Motor neuron (in vitro differentiated cells): ENCODE measurements at regions of chr12 and their contacts with region 1.

Region 1: DNA sequence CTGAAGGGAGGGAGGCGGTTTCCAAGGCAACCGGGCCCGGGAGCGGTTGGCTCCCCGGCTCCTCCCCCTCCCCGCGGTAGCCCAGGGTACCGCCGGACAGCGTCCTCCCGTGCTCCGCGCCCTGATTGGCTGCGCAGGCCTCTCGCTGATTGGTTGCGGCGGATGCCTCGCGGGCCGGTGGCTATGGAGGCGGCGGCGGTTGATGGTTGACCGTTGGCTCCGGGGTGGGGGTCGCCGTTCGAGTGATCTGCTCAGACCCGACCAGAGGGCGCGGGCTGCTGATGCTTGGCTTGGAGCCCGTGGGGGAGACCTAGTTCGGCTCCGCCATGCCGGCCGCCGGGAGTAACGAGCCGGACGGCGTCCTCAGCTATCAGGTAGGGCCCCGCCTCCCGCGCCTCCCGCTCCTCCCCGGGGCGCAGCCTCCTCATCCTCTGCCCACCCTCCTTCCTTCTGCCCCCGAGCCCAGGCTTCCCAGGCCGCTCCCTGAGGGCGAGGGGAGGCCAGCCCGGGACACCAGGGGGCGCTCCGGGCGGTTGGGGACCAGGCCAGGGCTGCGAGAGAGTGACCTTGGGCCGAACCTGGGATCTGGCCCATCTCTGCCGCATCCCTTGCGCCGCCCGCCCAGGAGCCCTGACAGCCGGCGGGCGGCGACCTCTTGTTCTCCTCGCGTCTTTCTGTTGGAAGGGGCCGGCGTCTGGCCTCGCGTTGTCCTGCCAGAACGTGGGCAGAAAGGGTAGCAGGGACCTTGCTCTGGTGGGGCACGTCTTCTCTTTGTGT is at the start of gene SLC4A8:
- ATAC-seq: peak; percentile 95 to 98 (median 96)
- H3K4me3 ChIP-seq: peak within 1 kb of the TSS; percentile 58 to 78 (median 66)
- H3K27ac ChIP-seq: peak within 1 kb of the TSS; percentile 88 to 91
- H3K4me1 ChIP-seq: peaks cover 12 to 15% of the 10 kb centered on the region in 2 donors
- total RNA-seq, gene SLC4A8: 5.8 to 26.3 (median 19.8) TPM

Region 2: DNA sequence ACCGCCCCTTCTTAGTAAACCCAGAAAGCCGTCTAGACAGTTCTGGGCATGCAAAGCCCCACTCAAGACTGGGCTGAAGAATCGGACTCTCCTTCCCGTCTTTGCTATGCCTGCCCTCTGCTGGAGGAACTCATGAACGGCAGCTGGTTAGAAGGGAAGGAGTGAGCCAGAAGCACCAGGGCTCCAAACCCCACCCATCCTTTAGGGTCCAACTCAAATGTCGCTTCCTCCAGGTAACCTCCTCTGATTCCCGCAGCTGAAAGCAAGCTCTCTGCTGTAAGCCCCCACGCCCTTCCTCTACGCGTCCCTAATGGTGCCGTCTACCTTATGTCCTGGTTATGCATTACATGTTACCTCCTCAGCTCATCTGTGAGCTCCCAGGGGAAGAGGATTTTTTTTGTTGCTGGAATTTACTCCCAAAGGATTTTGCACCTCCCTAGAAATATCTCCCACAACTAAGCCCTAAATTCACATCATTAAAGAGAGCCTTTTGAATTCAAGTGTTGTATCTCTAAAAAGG is 107.2 kb after region 1 on chr12:
- in situ Hi-C with region 1: loop called in 2 of 9 experiments (anchors 10 to 25 kb)
- ATAC-seq: peak; percentile 92 to 98 (median 96)
- H3K4me3 ChIP-seq: no peak overlapping the region
- H3K27ac ChIP-seq: no peak overlapping the region
- H3K4me1 ChIP-seq: peaks cover 0 to 3% of the 10 kb centered on the region in 2 donors

Region 3: DNA sequence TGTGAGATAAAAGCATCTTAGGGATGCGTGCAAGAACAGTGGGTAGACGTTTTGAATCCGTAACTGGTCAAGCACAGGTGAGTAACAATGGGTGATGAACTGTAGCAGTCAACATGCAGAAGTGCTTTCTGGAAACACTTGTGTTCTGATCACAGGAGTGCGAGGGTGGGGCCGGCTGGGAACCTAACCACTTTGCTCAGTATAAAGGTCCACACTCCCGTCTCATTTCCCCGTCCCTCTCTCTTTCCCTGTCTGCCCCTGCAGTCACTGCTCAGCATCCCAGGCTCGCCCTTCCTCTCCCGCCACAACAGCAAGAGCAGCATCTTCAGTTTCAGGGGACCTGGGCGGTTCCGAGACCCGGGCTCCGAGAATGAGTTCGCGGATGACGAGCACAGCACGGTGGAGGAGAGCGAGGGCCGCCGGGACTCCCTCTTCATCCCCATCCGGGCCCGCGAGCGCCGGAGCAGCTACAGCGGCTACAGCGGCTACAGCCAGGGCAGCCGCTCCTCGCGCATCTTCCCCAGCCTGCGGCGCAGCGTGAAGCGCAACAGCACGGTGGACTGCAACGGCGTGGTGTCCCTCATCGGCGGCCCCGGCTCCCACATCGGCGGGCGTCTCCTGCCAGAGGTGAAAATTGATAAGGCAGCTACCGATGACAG is 296.6 kb after region 1 on chr12:
- in situ Hi-C with region 1: no loop called
- ATAC-seq: peak in 2 of 8 experiments; percentile 94 to 99
- H3K4me3 ChIP-seq: no peak overlapping the region
- H3K27ac ChIP-seq: no peak overlapping the region
- H3K4me1 ChIP-seq: no peaks in the 10 kb centered on the region

Region 4: GRCh38 chr12:51814311-51815088 is 389.6 kb after region 1 on chr12:
- in situ Hi-C with region 1: loop called in 1 of 9 experiments (anchors 25 kb)
- ATAC-seq: peak; percentile 83 to 96 (median 87)
- H3K4me3 ChIP-seq: peak overlapping the region; percentile 30 to 43 (median 33)
- H3K27ac ChIP-seq: no peak overlapping the region
- H3K4me1 ChIP-seq: peaks cover 0 to under 1% of the 10 kb centered on the region in 2 donors

Region 5: GRCh38 chr12:51886021-51886322 is 461.1 kb after region 1 on chr12:
- in situ Hi-C with region 1: loop called in 1 of 9 experiments (anchors 25 kb)
- ATAC-seq: peak; percentile 45 to 95 (median 90)
- H3K4me3 ChIP-seq: no peak overlapping the region
- H3K27ac ChIP-seq: no peak overlapping the region
- H3K4me1 ChIP-seq: peaks cover 5 to 11% of the 10 kb centered on the region in 2 donors